PC-9 (cell line): ENCODE measurements at regions of chr4 and their contacts with region 1.

Region 1: DNA sequence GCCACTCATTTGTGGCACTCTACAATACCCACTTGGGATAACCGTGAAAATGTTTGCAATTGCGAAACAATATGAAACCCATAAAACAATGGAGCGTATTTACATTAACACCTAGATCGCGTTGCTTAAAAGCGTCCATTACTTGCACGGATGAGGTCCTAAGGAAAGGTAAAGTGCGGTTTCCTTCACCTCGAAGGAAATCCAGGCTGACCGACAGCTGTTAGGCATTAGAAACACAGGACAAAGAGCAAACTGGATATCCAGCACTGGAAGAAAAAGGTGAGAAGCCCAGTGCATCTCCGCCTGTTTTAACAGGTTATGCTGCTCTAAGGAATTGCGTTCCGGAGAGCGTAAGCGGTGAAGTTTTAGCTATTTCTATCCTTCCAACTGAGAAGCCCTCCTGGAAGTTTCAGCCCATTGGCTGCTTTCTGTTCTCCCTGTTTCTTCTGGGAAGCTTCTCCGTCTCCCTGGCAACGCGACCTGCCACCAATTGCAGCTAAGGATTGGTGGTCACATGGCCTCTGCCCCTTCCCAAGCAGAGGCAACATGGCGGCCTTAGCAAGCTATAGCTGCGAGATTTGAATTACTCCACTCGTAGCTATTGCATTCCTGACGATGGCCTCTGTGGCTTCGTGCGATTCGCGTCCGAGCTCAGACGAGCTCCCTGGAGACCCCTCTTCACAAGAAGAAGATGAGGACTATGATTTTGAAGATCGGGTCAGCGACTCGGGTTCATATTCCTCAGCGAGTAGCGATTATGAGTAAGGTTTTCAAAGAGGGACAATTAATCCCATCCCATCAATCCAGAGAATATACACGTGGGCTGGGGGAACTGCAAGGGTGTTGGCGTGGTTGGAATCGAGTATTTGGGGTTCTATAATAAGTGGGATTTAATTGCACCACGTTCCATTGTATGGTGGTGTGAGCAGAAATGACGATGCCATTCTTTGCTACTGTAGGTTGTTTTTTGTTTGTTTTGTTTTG is at the start of gene INTU:
- DNase-seq: peak; percentile 89 to 98
- H3K4me3 ChIP-seq: peak within 1 kb of the TSS; percentile 67
- H3K27ac ChIP-seq: peak within 1 kb of the TSS; percentile 44
- H3K4me1 ChIP-seq: peaks cover 26% of the 10 kb centered on the region
- H3K27me3 ChIP-seq: no peaks in the 10 kb centered on the region
- CTCF ChIP-seq: no peak
- total RNA-seq, gene INTU: 9.7 and 10.5 TPM in 2 replicates

Region 2: DNA sequence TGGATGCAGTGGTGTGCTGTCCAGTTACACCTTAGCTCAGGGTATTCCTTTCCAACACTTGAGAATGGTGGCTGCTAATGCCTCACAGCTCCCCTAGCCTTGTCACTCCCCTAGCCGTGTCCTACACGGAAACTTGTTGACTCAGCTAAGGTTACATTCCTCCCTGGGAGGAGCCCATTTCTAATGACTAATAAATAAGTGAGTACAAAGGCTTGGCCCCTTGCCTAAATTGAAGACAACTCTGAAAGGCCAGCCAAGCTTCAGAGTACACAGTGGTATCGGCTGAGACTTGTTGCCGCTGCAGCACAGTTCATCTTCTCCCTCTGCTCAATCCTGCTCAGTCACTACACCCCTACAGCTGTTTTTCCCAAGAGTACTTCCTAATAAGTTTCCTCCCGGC is 76.3 kb after region 1 on chr4:
- CTCF ChIA-PET with region 1: no interaction called
- POLR2A ChIA-PET with region 1: interaction called, 5 read pairs
- intact Hi-C with region 1: loop called (anchors 5 kb)
- DNase-seq: peak; percentile 74 to 100
- H3K4me3 ChIP-seq: peak overlapping the region; percentile 31; the same call in 1 of the 2 replicates
- H3K27ac ChIP-seq: peak overlapping the region; percentile 88
- H3K4me1 ChIP-seq: peaks cover 26% of the 10 kb centered on the region
- H3K27me3 ChIP-seq: no peaks in the 10 kb centered on the region
- CTCF ChIP-seq: no peak